ENCODE measurements at regions of chr5 and their contacts with region 1.

Region 1: DNA sequence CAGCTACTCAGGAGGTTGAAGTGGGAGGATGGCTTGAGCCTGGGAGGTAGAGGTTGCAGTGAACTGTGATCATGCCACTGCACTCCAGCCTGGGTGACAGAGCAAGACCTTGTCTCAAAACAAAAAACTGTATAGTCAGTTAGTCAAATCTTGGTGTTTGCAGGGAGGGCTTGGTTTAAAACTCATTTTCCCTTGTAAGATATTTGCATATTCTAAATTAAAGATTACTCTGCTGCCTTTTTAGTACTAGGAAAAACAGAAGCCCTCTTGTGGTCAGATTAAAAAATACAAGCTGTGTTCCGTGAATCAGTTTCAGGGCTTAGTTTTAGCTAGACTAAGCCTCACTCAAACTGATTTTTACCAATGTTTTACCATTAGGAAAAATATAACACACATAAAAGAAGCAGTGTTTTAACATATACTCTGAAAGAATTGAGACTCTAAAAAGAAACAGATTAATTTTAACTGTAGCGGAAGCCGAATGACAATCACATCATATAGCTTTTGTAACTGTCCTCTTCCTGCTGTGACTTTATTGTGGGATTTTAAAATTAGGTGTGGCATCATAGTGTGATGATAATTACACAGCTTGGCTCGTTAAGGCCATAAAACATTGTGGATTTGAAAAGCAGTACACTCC is 84.9 kb upstream of the BASP1 start:
- DNase-seq: no peak
- H3K4me3 ChIP-seq: no peak overlapping the region
- CTCF ChIP-seq: peak; percentile 45

Region 2: DNA sequence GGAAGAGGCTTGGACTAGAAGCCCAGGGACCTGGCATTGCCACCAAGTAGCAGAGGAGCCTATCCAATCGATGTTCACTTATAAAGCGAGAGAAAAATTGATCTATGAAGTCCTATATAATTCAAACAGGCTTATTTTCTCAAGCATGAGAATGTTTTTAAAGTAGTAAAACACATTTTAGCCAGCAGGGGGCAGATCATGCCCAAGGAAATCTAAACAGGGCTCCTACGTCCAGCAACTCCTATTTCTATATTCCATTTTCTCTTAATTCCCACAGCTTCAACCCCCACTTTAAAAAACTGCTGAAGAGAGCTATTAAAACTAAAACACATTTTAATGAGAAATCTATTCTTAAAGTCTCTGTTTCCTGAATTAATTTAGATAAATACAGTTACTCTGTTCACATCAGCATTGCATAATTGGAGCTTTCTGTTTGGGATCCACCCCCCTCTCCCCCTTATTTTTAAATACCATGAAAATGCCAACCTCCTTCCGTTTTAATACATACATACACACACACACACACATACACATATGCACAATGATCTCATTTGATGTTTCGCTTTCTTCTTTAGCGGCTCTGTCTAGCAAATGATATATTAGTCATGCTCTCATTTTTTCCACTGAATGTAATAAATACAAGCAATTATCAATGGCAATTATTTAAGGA is 341.4 kb before region 1 on chr5:
- CTCF ChIA-PET with region 1: interaction called, 29 read pairs
- POLR2A ChIA-PET with region 1: no interaction called
- DNase-seq: no peak
- H3K4me3 ChIP-seq: no peak overlapping the region
- CTCF ChIP-seq: peak; percentile 22

Region 3: GRCh38 chr5:16957304-16958196 is 175.0 kb before region 1 on chr5:
- CTCF ChIA-PET with region 1: interaction called, 10 read pairs
- POLR2A ChIA-PET with region 1: no interaction called
- DNase-seq: peak; percentile 82
- H3K4me3 ChIP-seq: no peak overlapping the region
- CTCF ChIP-seq: no peak

Region 4: GRCh38 chr5:17113163-17113958 is 19.2 kb before region 1 on chr5:
- CTCF ChIA-PET with region 1: interaction called, 58 read pairs
- POLR2A ChIA-PET with region 1: interaction called, 3 read pairs
- DNase-seq: peak; percentile 92
- H3K4me3 ChIP-seq: no peak overlapping the region
- CTCF ChIP-seq: no peak

Region 5: GRCh38 chr5:17143335-17143734 is 10.8 kb after region 1 on chr5:
- CTCF ChIA-PET with region 1: interaction called, 110 read pairs
- POLR2A ChIA-PET with region 1: interaction called, 3 read pairs
- DNase-seq: no peak
- H3K4me3 ChIP-seq: no peak overlapping the region
- CTCF ChIP-seq: no peak

Region 6: GRCh38 chr5:17614872-17615605 is 482.5 kb after region 1 on chr5:
- CTCF ChIA-PET with region 1: no interaction called
- POLR2A ChIA-PET with region 1: no interaction called
- DNase-seq: no peak
- H3K4me3 ChIP-seq: no peak overlapping the region
- CTCF ChIP-seq: no peak

Measured in AG04449 (cell line).